ENCODE measurements at regions of chr2 and their contacts with region 1.

Region 1: DNA sequence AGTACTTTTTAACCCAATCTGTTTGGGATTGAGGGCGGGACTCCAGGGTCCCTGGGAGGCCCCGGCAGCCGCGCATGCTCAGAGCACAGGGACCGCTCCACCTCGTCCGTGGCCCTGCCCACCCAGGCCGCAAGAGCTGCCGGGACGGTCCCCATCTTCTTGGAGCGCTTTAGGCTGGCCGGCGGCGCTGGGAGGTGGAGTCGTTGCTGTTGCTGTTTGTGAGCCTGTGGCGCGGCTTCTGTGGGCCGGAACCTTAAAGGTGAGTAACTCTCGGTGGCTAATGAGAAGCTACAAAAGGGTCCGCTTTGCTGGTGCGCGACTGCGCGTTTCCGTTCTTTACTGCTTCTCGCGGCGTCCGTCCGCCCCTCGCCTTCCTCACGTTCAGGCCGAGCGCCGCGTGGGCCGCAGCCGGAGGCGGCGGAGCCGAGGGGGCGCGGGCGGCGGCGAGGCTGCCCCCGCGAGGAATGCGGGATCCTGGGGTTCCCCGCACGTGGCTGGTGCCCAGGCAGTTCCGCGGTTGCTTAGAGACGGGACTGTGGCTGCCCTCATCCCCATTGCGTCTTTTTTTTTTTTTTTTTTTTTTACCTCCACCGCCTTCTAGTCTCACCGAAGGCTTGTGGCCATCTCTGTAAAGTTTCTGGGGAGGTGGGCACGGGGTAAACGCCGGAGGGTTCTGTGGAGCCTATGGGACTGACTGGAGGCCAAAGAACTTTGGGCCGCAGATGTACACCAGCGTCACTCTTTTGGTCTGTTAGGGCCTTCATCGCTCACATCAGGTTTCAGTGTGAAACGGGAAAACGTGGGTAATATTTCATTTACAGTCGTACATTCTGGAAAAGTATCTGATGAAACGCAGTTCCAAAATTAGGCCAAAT is at the start of gene SSB:
- DNase-seq: peak; percentile 81 to 96 (median 86)
- ATAC-seq: peak; percentile 92 to 93
- H3K4me3 Mint-ChIP-seq: peak within 1 kb of the TSS; percentile 83 to 96 (median 90)
- H3K27ac Mint-ChIP-seq: peak within 1 kb of the TSS; percentile 88 to 98 (median 96)
- H3K4me1 Mint-ChIP-seq: peaks cover 7 to 40% (median 23%) of the 10 kb centered on the region in 4 donors
- H3K27me3 Mint-ChIP-seq: peaks cover 0 to 2% (median 0%) of the 10 kb centered on the region in 5 donors
- polyA plus RNA-seq, gene SSB: 124 to 153 (median 128) TPM

Region 2: DNA sequence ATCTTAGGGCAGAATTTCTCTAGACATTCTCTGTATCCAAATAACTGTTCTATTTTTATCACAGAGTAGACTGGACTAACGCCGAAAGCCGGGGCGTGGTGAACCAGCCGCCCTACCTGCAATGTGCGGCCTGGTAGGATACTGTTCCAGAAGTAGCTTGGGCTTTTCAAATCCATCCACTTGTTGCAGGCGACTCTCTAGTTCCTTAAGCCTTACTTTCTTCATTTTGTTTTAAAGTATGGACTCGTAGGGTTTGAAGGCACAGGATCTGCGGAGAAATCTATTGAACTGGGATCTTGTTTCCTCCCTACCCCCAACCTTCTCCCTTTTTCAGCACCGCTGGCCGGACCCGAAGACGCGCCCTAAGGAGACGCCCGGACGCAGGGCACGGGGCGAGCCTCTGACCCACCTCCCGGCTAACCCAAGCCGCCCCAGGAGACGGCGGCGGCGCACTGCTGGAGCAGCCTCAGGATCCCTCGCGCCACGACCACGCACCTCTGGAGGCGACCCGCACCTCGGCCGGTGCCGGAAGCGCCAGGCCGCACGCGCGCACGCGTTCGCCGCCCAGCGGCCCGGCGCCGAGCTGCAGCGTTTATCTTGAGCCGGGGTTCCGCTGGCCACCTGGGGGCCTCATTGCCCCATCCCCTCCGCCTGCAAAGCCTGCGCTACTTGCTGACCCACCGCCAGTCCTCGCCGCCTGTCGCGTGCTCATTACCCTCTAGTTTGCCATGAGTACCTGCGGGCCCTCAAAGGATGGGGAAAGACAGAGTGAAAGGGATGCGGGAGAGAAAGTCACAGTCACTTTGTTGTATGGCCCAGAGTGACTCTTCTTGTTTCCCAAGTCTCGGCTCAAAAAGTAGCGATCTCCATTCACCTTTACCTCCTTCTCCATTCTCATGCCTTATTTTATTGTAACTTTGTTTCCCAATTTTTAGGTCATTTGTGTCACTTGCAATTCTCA is 25.7 kb after region 1 on chr2 and contains the start of gene METTL5:
- POLR2A ChIA-PET with region 1: interaction called, 14 read pairs
- DNase-seq: peak; percentile 46 to 79 (median 76)
- ATAC-seq: peak; percentile 68 to 71
- H3K4me3 Mint-ChIP-seq: peak within 1 kb of the TSS; percentile 82 to 97 (median 94)
- H3K27ac Mint-ChIP-seq: peak within 1 kb of the TSS; percentile 84 to 97 (median 95)
- H3K4me1 Mint-ChIP-seq: peaks cover 33 to 72% (median 66%) of the 10 kb centered on the region in 4 donors
- H3K27me3 Mint-ChIP-seq: no peaks in the 10 kb centered on the region
- polyA plus RNA-seq, gene METTL5: 115 to 155 (median 130) TPM

Region 3: DNA sequence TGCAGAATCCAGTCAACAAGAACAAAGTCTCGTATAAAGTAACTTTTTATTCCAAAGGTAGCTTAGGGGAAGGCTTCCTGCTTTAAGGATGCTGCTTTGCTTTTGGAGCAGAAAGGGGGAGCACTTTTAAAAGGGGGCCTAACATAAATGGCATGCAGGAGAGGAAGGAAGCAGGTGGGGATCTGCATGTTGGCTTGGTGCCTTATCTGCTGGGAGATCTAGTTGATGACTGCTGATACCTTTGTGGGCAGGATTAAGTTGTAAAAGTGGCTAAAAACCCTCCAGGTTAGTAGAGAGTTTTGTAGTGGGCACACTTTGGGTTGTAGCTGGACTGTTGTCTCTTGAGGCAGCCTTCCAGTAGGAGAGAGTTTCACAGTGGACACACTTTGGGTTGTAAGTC is 50.8 kb after region 1 on chr2:
- POLR2A ChIA-PET with region 1: no interaction called
- DNase-seq: no peak
- ATAC-seq: no peak
- H3K4me3 Mint-ChIP-seq: peak overlapping the region in 4 of 10 donors; percentile 5 to 45 (median 6)
- H3K27ac Mint-ChIP-seq: peak overlapping the region in 5 of 10 donors; percentile 33 to 74 (median 61)
- H3K4me1 Mint-ChIP-seq: peaks cover 26 to 65% (median 56%) of the 10 kb centered on the region in 4 donors
- H3K27me3 Mint-ChIP-seq: no peaks in the 10 kb centered on the region

Region 4: DNA sequence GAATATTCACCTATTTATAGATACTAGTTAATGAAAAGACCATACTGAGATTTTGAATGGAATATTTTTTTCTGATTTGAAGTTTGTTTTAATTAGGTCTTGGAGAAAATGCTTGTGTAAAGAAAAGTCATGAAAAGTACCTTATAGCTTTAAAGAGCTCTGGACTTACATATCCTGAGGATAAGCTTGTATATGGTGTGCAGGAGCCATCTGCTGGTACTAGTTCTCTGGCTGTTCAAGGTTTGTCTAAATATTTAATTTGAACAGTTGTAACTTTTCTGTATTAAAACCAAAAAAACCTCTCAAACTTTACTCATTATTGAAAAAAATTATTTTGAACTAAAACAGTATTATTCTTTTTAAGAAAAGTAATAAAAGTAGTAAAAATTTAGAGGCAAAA is 78.4 kb after region 1 on chr2:
- POLR2A ChIA-PET with region 1: no interaction called
- DNase-seq: peak in 3 of 10 donors; percentile 2 to 4 (median 4)
- ATAC-seq: no peak
- H3K4me3 Mint-ChIP-seq: no peak overlapping the region
- H3K27ac Mint-ChIP-seq: peak overlapping the region in 1 of 10 donors; percentile 11
- H3K4me1 Mint-ChIP-seq: peaks cover 0 to 4% (median under 1%) of the 10 kb centered on the region in 4 donors
- H3K27me3 Mint-ChIP-seq: no peaks in the 10 kb centered on the region

Region 5: GRCh38 chr2:170123593-170123992 is 324.6 kb after region 1 on chr2:
- POLR2A ChIA-PET with region 1: no interaction called
- DNase-seq: no peak
- ATAC-seq: no peak
- H3K4me3 Mint-ChIP-seq: no peak overlapping the region
- H3K27ac Mint-ChIP-seq: no peak overlapping the region
- H3K4me1 Mint-ChIP-seq: peaks cover 0 to 1% (median 0%) of the 10 kb centered on the region in 4 donors
- H3K27me3 Mint-ChIP-seq: peaks cover 7 to 19% (median 14%) of the 10 kb centered on the region in 5 donors

Measured in naive thymus-derived CD8-positive, alpha-beta T cell (primary cell).